A673 (cell line): ENCODE measurements at regions of chr9 and their contacts with region 1.

Region 1: DNA sequence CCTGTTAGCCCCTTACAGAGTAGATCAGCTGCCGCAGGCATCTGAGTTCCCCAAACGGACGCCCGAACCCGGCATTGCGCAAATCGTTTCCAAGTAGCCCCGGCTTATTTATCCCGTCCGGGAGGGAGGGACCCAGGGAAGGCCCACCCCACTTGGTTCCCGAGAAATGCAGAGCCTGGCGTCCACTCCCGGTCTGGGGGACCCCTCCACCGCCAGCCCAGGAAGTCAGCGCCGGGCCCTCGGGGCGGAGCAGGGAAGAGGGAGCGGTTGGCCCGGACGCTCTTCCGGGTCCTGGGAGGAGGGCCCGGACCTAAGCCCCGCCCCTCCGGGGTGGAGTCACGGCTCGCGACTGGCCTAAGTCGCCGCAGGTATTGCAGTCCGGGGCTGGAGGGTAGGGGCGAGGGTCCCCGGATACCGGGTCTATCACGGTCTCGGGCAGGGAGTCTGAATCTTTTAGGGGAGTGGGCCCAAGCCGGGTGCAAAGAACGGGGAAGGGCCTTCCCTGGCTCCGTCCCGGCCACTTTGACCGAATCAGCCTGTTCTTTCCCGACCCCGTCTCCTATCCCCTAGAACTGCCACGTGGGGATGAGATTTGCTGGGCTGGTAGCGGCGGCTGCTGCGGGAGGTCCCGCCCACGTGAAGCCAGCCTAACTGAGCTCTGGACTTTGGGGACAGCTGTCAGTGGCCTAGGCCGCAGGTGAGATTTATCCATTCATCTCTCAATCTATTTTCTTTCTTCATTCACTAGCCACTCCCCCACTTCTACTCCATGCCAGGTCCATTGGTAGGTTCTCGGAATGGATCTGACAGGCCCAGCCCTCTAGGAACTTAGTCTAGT is at the start of gene RABEPK:
- DNase-seq: peak; percentile 96
- H3K4me3 ChIP-seq: peak within 1 kb of the TSS; percentile 77
- H3K27ac ChIP-seq: peak within 1 kb of the TSS; percentile 80
- H3K4me1 ChIP-seq: peaks cover 4% of the 10 kb centered on the region
- H3K27me3 ChIP-seq: no peaks in the 10 kb centered on the region
- CTCF ChIP-seq: no peak
- total RNA-seq, gene RABEPK: 32.7 and 43.6 TPM in 2 replicates

Region 2: GRCh38 chr9:125214186-125214585 is 13.8 kb after region 1 on chr9:
- CTCF ChIA-PET with region 1: interaction called, 10 read pairs
- POLR2A ChIA-PET with region 1: no interaction called
- intact Hi-C with region 1: no loop called
- DNase-seq: no peak
- H3K4me3 ChIP-seq: no peak overlapping the region
- H3K27ac ChIP-seq: no peak overlapping the region
- H3K4me1 ChIP-seq: no peaks in the 10 kb centered on the region
- H3K27me3 ChIP-seq: no peaks in the 10 kb centered on the region
- CTCF ChIP-seq: no peak

Region 3: DNA sequence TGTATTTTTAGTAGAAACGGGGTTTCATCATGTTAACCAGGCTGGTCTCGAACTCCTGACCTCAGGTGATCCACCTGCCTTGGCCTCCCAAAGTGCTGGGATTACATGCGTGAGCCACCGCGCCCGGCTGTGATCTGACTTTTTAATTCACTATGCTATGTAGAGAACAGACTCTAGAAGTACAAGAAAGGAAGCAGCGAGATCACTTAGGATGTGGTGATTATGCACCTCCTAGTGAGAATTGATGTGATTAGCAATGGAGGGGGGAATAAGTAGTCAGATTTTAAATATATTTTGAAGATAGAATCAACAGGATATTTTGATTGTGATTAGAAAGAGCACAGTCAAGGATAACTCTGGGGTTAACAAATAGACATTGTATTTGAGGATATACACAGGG is 97.5 kb after region 1 on chr9:
- CTCF ChIA-PET with region 1: no interaction called
- POLR2A ChIA-PET with region 1: no interaction called
- intact Hi-C with region 1: no loop called
- DNase-seq: peak; percentile 31
- H3K4me3 ChIP-seq: no peak overlapping the region
- H3K27ac ChIP-seq: no peak overlapping the region
- H3K4me1 ChIP-seq: no peaks in the 10 kb centered on the region
- H3K27me3 ChIP-seq: no peaks in the 10 kb centered on the region
- CTCF ChIP-seq: peak; percentile 12; the same call in 1 of the 2 replicates